ENCODE measurements at regions of chr19 and their contacts with region 1.

Region 1: GRCh38 chr19:45485305-45486077 is 11.4 kb downstream of the RTN2 start:
- DNase-seq: peak; percentile 99
- ATAC-seq: peak; percentile 98
- H3K4me3 Mint-ChIP-seq: peak overlapping the region; percentile 85
- H3K27ac Mint-ChIP-seq: peak overlapping the region; percentile 90
- H3K4me1 Mint-ChIP-seq: peaks cover 12% of the 10 kb centered on the region
- H3K27me3 Mint-ChIP-seq: no peaks in the 10 kb centered on the region

Region 2: DNA sequence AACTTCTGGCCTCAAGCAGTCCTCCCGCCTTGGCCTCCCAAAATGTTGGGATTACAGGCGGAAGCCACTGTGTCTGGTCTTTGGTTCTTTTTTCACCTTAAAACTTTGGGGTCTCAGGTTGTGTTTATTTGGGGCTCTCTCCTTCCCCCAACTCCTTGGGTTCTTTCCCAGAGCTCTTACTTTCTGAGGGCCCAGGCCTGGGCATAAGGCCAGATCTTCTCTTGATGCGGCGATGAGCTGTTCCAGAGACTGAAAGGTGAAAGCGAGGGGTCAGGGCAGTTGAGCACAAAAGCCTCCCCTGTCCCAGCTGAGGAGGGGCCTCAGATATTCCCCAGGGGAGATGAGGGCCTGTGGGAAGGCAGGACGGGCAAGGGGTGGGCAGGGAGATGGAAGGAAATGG is 72.0 kb before region 1 on chr19:
- CTCF ChIA-PET with region 1: interaction called, 14 read pairs
- DNase-seq: no peak
- ATAC-seq: no peak
- H3K4me3 Mint-ChIP-seq: no peak overlapping the region
- H3K27ac Mint-ChIP-seq: no peak overlapping the region
- H3K4me1 Mint-ChIP-seq: peaks cover 6% of the 10 kb centered on the region
- H3K27me3 Mint-ChIP-seq: no peaks in the 10 kb centered on the region

Region 3: GRCh38 chr19:45496349-45496953 is 11.0 kb after region 1 on chr19:
- CTCF ChIA-PET with region 1: interaction called, 108 read pairs
- DNase-seq: peak; percentile 72
- ATAC-seq: peak; percentile 25
- H3K4me3 Mint-ChIP-seq: peak overlapping the region; percentile 29
- H3K27ac Mint-ChIP-seq: no peak overlapping the region
- H3K4me1 Mint-ChIP-seq: peaks cover 40% of the 10 kb centered on the region
- H3K27me3 Mint-ChIP-seq: peaks cover 25% of the 10 kb centered on the region

Region 4: DNA sequence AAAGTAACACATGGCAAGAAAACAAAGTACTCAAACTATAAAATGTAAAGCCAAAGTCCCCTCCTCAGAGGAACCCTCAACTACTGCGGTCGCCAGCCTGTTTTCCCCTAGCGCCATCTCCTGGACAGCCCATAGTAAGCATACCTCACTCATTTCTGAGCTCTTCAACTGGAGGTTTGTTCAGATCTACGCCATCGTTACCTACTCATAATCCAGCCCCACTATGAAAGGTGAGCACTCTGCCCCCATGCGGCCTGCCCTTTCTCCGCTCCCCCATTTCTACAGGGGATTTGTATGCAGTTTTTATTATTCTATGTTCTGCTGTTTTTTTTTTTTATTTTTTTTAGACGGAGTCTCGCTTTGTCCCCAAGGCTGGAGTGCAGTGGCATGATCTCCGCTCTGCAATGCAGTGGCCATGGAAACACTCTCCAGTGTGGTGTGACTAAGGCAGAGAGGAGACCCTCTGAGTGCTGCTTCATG is 72.9 kb after region 1 on chr19:
- CTCF ChIA-PET with region 1: interaction called, 21 read pairs
- DNase-seq: peak; percentile 81
- ATAC-seq: peak; percentile 97
- H3K4me3 Mint-ChIP-seq: no peak overlapping the region
- H3K27ac Mint-ChIP-seq: no peak overlapping the region
- H3K4me1 Mint-ChIP-seq: peaks cover 15% of the 10 kb centered on the region
- H3K27me3 Mint-ChIP-seq: no peaks in the 10 kb centered on the region

Measured in activated CD8-positive, alpha-beta memory T cell treated with anti-CD3 and anti-CD28 coated beads, Interleukin-2, amount 10 ng/mL, durations not matched to agents 7 days and 5 days (primary cell).